Activated B cell treated with CpG ODN at 0.5 μM for 24 hours (primary cell): ENCODE measurements at regions of chr11 and their contacts with region 1.

Region 1: DNA sequence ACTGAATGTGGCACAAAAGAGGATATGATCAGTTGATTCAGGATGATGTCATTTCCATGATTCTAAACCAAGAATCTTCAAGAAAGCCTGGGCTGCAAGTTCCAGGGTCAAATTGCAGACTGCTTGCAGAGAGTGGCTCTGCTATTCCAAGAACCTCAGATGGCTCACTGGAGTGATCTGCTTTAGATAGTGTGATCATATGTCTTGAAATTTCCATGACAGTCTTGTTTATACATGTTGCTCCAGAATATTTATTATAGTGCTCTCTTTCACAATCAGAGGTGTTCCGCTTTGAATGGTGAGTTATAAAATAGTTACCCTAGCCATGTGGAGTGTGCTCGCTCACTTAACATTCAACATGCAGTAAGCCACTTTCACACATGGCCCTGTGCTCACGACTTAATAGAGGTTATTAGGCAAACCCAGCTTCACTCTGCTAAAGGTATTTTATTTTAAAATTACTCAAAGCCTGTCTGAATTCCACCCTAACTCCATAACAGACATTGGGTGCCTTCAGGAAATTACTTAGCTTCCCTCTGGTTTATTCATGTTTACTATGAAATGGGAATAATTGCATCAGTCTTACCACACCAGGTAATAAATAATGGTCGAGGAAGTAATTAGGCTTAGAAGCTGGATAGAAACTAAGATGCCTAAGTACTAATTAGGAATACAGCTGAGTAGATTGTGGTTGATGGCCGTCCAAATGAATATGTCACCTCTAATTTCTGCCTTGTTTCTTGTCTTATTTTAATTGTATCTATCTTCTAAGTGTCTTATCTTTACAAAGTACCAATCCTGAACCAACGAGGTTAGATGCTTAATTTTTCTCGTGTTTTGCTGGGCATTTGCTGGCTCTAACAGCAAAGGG is 187.9 kb downstream of the ETS1 start:
- DNase-seq: no peak
- ATAC-seq: peak; percentile 81
- H3K4me3 Mint-ChIP-seq: peak overlapping the region; percentile 40
- H3K27ac Mint-ChIP-seq: peak overlapping the region; percentile 91
- H3K4me1 Mint-ChIP-seq: peaks cover 29% of the 10 kb centered on the region
- H3K27me3 Mint-ChIP-seq: no peaks in the 10 kb centered on the region
- CTCF ChIP-seq: no peak

Region 2: DNA sequence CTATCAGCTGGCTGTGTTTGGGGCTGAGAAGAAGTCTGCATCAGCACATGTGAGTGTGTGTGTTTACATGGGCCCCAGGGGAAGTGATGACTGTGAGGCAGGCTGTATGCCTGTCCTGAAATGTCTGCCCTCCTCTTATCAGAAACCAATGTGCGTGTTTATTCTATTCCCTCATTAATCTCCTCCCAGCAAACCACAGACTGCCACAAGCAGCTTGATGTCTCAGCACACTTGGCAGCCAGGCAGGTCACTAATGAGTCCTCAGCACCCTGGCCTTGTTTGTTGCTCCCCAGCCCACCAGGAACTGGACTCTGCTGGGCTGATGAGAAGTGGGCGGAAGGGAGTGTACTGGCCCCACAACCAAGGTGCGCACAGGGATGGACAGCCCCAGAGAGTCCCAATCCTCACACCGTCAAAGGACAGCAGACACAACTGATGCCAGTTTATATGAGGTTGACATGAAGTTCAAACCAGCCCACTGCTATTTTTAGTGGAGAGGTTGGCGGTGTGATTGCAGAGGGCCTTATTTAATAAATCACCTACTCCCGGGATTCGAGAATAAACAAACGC is 38.0 kb before region 1 on chr11:
- CTCF ChIA-PET with region 1: no interaction called
- POLR2A ChIA-PET with region 1: no interaction called
- intact Hi-C with region 1: loop called (anchors 5 kb)
- DNase-seq: no peak
- ATAC-seq: peak; percentile 86
- H3K4me3 Mint-ChIP-seq: peak overlapping the region; percentile 6
- H3K27ac Mint-ChIP-seq: peak overlapping the region; percentile 73
- H3K4me1 Mint-ChIP-seq: peaks cover 18% of the 10 kb centered on the region
- H3K27me3 Mint-ChIP-seq: no peaks in the 10 kb centered on the region
- CTCF ChIP-seq: no peak

Region 3: GRCh38 chr11:128412847-128413791 is 13.6 kb after region 1 on chr11:
- CTCF ChIA-PET with region 1: interaction called, 3 read pairs
- POLR2A ChIA-PET with region 1: interaction called, 4 read pairs
- intact Hi-C with region 1: loop called (anchors 1 kb)
- DNase-seq: no peak
- ATAC-seq: peak; percentile 73
- H3K4me3 Mint-ChIP-seq: peak overlapping the region; percentile 69
- H3K27ac Mint-ChIP-seq: peak overlapping the region; percentile 74
- H3K4me1 Mint-ChIP-seq: peaks cover 32% of the 10 kb centered on the region
- H3K27me3 Mint-ChIP-seq: no peaks in the 10 kb centered on the region
- CTCF ChIP-seq: no peak

Region 4: DNA sequence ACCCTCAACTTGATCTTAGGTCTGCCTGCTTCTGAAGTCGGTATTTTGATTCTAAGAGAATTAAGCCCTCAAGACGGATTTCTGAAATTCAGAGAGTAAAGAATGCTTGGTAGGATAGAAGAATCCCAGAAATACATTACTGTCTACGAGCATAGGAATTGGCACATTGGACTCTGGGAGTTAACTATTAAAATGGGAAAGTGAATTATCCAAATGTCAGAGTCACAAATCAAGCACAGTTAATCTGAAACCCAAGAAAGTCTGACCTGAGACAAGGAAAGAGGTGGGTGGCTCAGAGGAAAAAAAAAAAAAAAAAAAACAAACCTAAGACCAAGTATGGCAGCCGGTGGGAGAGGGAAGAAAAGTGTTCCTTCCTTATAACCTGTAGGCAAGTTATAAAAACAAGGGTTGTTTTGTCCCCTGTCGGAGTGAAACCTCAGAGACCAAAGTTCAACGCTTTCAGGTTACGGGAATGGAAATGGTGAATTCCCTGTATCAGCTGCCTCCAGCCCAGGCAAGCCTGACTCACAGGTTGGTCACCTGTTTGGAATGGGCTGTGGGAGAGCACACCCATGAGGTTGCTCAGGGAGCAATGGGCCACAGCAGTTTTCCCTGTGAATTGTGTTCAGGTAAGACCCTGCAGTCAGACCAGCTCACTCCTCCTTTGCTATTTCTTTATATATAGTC is 48.9 kb after region 1 on chr11:
- CTCF ChIA-PET with region 1: no interaction called
- POLR2A ChIA-PET with region 1: interaction called, 3 read pairs
- intact Hi-C with region 1: loop called (anchors 2 kb)
- DNase-seq: no peak
- ATAC-seq: no peak
- H3K4me3 Mint-ChIP-seq: no peak overlapping the region
- H3K27ac Mint-ChIP-seq: no peak overlapping the region
- H3K4me1 Mint-ChIP-seq: peaks cover 52% of the 10 kb centered on the region
- H3K27me3 Mint-ChIP-seq: no peaks in the 10 kb centered on the region
- CTCF ChIP-seq: no peak